ENCODE measurements at regions of chr13 and their contacts with region 1.

Region 1: DNA sequence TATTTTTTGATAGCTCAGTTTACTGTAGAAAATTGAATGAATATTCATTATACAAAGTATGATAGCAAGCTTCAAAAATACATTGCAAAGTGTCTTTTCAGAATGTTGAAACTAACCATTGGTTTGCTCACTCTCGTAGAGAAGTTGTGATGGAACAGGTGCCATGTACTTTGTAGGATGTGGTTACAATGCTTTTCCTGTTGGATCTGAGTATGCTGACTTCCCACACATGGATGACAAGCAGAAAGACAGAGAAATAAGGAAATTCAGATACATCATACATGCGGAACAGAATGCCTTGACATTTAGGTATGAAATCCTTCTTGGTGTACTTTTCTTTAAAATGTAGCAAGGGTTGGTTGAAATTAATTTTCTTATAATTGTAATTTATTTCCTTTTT is 30.5 kb downstream of the CDADC1 start:
- DNase-seq: no peak
- H3K4me3 ChIP-seq: no peak overlapping the region
- H3K4me3 Mint-ChIP-seq: no peak overlapping the region
- H3K27ac ChIP-seq: no peak overlapping the region
- H3K27ac Mint-ChIP-seq: no peak overlapping the region
- H3K4me1 ChIP-seq: no peaks in the 10 kb centered on the region
- H3K4me1 Mint-ChIP-seq: no peaks in the 10 kb centered on the region
- H3K27me3 ChIP-seq: no peaks in the 10 kb centered on the region
- H3K27me3 Mint-ChIP-seq: no peaks in the 10 kb centered on the region

Region 2: DNA sequence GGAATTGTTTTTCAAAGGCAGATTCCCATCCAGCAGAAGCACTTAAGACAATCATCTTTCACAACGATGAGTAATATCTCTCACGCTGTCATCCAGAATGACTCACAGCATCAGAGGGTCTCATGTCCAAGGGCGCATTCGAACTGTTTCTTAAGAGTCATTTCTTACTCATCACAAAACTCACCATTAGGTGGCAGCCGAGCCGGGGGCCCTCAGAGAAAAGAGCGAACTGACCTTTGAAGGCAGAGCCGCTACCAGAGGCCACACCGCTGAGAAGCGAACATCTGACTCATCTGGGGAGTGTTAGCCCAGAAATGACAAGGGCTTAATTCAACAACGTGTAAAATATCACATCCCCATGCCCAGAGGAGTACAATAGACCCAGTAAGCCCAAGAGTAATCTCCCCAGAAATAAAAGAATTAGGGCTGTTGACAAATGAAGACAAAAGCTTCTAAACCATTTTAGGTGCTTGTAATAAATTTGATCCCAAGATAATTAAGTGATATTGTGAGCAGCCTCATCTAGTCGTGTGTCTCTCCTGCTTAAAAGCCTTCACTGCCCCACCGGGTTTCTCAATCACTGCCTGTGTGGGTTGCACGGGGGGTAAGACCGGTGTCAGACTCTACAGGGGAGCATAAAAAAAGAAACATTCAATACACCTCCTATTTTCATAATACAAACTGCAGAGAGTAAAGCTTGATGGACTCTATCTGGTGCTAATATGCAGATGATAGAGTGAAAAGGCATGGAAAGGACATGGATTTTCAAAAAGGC is 528.3 kb before region 1 on chr13:
- CTCF ChIA-PET with region 1: no interaction called
- POLR2A ChIA-PET with region 1: no interaction called
- intact Hi-C with region 1: loop called (anchors 2 kb)
- DNase-seq: peak; percentile 10 to 51 (median 13)
- H3K4me3 ChIP-seq: no peak overlapping the region
- H3K4me3 Mint-ChIP-seq: peak overlapping the region in 7 of 8 donors; percentile 51 to 80 (median 58)
- H3K27ac ChIP-seq: no peak overlapping the region
- H3K27ac Mint-ChIP-seq: peak overlapping the region in 5 of 7 donors; percentile 28 to 89 (median 76)
- H3K4me1 ChIP-seq: peaks cover 13% of the 10 kb centered on the region
- H3K4me1 Mint-ChIP-seq: peaks cover 3 to 13% (median 8%) of the 10 kb centered on the region in 4 donors
- H3K27me3 ChIP-seq: no peaks in the 10 kb centered on the region
- H3K27me3 Mint-ChIP-seq: no peaks in the 10 kb centered on the region

Region 3: GRCh38 chr13:49214917-49215376 is 63.3 kb before region 1 on chr13:
- CTCF ChIA-PET with region 1: interaction called, 36 read pairs
- POLR2A ChIA-PET with region 1: no interaction called
- intact Hi-C with region 1: loop called (anchors 2 kb)
- DNase-seq: peak; percentile 26 to 48 (median 45)
- H3K4me3 ChIP-seq: no peak overlapping the region
- H3K4me3 Mint-ChIP-seq: peak overlapping the region in 3 of 8 donors; percentile 13 to 56 (median 47)
- H3K27ac ChIP-seq: no peak overlapping the region
- H3K27ac Mint-ChIP-seq: peak overlapping the region in 2 of 7 donors; percentile 68 to 76
- H3K4me1 ChIP-seq: peaks cover 16% of the 10 kb centered on the region
- H3K4me1 Mint-ChIP-seq: peaks cover 12 to 27% (median 15%) of the 10 kb centered on the region in 4 donors
- H3K27me3 ChIP-seq: peaks cover 18% of the 10 kb centered on the region
- H3K27me3 Mint-ChIP-seq: peaks cover 27 to 28% of the 10 kb centered on the region in 2 donors

Region 4: GRCh38 chr13:49240017-49240416 is 38.2 kb before region 1 on chr13:
- CTCF ChIA-PET with region 1: interaction called, 65 read pairs
- POLR2A ChIA-PET with region 1: no interaction called
- intact Hi-C with region 1: loop called (anchors 1 kb)
- DNase-seq: peak in 4 of 5 donors; percentile 39 to 50 (median 40)
- H3K4me3 ChIP-seq: no peak overlapping the region
- H3K4me3 Mint-ChIP-seq: no peak overlapping the region
- H3K27ac ChIP-seq: no peak overlapping the region
- H3K27ac Mint-ChIP-seq: no peak overlapping the region
- H3K4me1 ChIP-seq: no peaks in the 10 kb centered on the region
- H3K4me1 Mint-ChIP-seq: peaks cover 0 to 3% (median 1%) of the 10 kb centered on the region in 4 donors
- H3K27me3 ChIP-seq: no peaks in the 10 kb centered on the region
- H3K27me3 Mint-ChIP-seq: peaks cover 0 to 6% of the 10 kb centered on the region in 2 donors

Region 5: DNA sequence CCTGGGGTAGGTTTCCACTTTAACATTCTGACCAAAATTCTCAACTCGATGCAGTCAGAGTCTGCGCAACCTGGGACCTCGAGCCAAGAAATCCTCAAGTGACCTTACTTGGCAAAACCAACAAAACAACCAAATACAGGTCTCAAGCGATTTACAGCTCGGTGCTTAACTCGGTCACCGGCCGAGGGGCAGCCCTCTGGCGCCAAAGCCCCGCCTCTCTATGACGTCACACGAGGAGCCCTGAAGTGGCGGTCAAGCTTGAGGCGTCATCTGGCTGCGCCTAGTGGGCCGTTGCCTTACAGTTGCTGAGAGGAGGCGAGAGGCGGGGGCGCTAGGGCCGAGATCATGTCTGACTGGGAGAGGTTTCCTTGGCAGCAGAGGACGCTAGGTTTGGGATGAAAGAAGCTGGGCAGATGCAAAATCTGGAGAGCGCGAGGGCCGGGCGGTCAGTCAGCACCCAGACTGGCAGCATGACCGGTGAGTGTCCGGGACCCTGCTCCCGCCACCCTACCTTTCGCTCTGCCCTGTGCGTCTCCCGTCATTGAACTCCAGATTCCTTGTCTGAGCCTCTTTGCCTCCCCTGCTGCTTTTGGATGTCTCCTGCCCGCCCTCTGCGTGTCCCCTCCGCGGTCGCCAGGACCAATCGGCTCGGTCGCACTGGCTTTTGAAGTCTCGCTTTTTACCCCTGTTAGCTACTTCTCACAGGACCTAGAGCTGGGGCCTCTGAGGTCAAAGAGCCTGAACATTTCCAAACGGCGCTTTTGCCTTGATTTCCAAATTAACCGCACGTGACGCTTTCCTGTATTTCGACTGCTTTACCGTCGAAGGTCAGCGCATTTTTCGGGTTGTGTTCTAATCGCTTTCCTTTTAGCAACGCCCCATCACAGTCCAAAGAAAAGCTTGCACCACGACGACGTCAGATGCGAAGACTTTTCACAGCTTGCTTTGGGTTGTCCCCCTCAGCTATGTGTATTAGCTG is 30.3 kb before region 1 on chr13 and contains the start of gene CDADC1:
- CTCF ChIA-PET with region 1: interaction called, 65 read pairs
- POLR2A ChIA-PET with region 1: interaction called, 3 read pairs
- intact Hi-C with region 1: loop called (anchors 2 kb)
- DNase-seq: peak; percentile 77 to 87 (median 81)
- H3K4me3 ChIP-seq: peak within 1 kb of the TSS; percentile 86 to 89
- H3K4me3 Mint-ChIP-seq: peak within 1 kb of the TSS; percentile 94 to 99 (median 97)
- H3K27ac ChIP-seq: peak within 1 kb of the TSS; percentile 89
- H3K27ac Mint-ChIP-seq: peak within 1 kb of the TSS; percentile 95 to 99 (median 97)
- H3K4me1 ChIP-seq: peaks cover 48% of the 10 kb centered on the region
- H3K4me1 Mint-ChIP-seq: peaks cover 24 to 51% (median 38%) of the 10 kb centered on the region in 4 donors
- H3K27me3 ChIP-seq: no peaks in the 10 kb centered on the region
- H3K27me3 Mint-ChIP-seq: peaks cover 0 to 4% of the 10 kb centered on the region in 2 donors
- total RNA-seq, gene CDADC1: 14.7 to 15.9 TPM

Region 6: GRCh38 chr13:49256841-49257240 is 21.4 kb before region 1 on chr13:
- CTCF ChIA-PET with region 1: interaction called, 16 read pairs
- POLR2A ChIA-PET with region 1: interaction called, 3 read pairs
- intact Hi-C with region 1: no loop called
- DNase-seq: no peak
- H3K4me3 ChIP-seq: no peak overlapping the region
- H3K4me3 Mint-ChIP-seq: peak overlapping the region in 5 of 8 donors; percentile 30 to 73 (median 35)
- H3K27ac ChIP-seq: no peak overlapping the region
- H3K27ac Mint-ChIP-seq: peak overlapping the region; percentile 59 to 95 (median 86)
- H3K4me1 ChIP-seq: peaks cover 39% of the 10 kb centered on the region
- H3K4me1 Mint-ChIP-seq: peaks cover 25 to 53% (median 39%) of the 10 kb centered on the region in 4 donors
- H3K27me3 ChIP-seq: no peaks in the 10 kb centered on the region
- H3K27me3 Mint-ChIP-seq: no peaks in the 10 kb centered on the region

Region 7: DNA sequence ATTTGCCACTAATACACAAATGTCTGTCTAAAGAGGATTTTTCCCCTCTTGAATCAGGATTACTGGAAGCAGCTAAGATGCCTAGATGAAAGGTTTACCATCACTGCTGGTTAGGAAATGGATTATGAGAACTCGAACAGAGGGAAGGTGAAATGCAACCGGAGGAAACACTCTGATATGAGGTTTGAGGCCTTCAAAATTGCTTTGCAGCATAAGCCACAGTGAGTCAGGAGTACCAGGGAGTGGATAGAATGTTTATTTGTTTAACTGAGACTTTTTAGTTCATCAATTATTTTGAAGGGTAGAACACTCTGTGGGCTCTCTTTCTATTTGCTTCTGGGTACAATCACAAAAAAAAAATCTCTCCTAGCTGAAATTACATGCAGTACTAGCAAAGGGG is 12.4 kb before region 1 on chr13:
- CTCF ChIA-PET with region 1: interaction called, 31 read pairs
- POLR2A ChIA-PET with region 1: no interaction called
- intact Hi-C with region 1: no loop called
- DNase-seq: no peak
- H3K4me3 ChIP-seq: no peak overlapping the region
- H3K4me3 Mint-ChIP-seq: no peak overlapping the region
- H3K27ac ChIP-seq: no peak overlapping the region
- H3K27ac Mint-ChIP-seq: peak overlapping the region in 1 of 7 donors; percentile 28
- H3K4me1 ChIP-seq: no peaks in the 10 kb centered on the region
- H3K4me1 Mint-ChIP-seq: peaks cover 0 to 2% (median under 1%) of the 10 kb centered on the region in 4 donors
- H3K27me3 ChIP-seq: no peaks in the 10 kb centered on the region
- H3K27me3 Mint-ChIP-seq: no peaks in the 10 kb centered on the region

Measured in CD4-positive, alpha-beta memory T cell (primary cell).